ENCODE measurements at regions of chr3 and their contacts with region 1.

Region 1: DNA sequence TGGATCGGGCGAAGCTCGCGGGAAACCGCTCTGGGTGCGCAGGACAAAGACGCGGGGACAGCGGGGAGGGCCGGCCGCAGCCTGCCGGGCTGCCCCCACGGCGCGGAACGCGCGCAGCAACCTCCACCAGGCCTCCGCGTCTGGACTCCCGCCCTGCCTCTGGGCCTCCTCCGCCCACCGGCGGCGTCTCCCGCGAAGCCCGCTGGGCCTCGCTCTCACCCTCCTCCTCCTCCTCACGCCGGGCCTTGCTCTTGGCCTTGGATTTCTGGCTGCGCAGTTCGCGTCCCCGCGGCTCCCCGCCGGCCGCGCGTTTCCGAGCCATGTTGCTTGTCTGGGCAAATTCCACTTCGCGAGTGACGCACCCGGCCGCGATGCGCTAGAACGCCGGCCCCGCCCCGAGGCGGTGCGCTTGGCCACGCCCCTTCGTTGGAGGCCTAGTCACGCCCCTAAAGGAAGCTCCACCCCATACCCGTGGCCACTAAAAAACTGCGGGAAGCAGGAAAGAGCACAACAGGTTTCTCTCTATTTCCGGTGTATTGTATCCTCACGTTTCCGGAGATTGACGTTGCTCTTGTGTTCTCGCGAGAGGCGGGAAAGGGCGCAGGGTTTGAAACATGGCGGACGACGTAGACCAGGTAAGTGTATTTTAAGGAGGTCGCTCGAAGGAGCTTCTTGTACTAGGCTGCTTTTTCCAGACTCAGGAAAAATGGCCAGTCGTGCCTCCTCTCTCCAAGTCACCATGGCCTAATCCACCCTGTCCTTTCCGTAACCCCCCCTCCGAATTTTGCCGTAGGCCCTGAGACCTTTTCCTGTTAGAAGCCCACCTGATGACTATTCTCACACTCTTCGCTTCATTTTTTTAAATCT is at the starts of genes LSM3 and XPC:
- DNase-seq: peak; percentile 96 to 99 (median 97)
- ATAC-seq: peak; percentile 99 to 100 (median 100)
- H3K4me3 ChIP-seq: peak within 1 kb of the TSS; percentile 51 to 92 (median 76)
- H3K27ac ChIP-seq: peak within 1 kb of the TSS; percentile 56 to 98 (median 94)
- H3K4me1 ChIP-seq: peaks cover 0 to 47% (median 32%) of the 10 kb centered on the region in 12 donors
- H3K27me3 ChIP-seq: no peaks in the 10 kb centered on the region
- CTCF ChIP-seq: peak in 1 of 12 donors; percentile 8
- POLR2A ChIP-seq: peak; percentile 68 to 97
- total RNA-seq, gene LSM3: 11.6 to 15.9 (median 13.7) TPM
- total RNA-seq, gene XPC: 7.0 to 20.0 (median 11.1) TPM

Region 2: DNA sequence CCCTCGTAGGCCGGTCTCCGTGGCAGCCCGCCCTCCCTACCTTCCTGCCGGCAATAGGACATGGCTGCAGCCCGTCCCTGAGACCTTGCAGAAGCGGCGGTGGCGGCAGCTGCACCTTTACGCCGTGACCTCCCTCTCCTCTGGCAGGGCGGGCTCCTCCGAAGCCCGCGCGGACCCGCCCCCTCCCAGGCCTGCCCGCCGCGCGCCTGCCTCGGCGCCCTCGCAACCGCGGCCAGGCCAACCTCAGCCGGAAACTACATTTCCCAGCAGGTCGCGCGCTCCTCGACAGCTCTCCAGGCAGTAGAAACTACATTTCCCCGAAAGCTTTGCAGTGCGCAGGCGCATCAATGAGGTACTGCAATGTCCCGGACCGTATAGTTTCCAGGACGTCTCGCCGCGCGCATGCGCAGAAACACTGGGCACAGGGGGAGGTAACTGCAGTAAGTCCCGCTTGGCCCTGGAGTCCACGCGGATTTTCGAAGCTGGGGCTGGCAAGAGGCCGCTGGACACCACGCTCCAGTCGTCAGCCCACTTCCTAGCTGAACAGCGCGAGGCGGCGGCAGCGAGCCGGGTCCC is 53.8 kb before region 1 on chr3 and contains the starts of genes CHCHD4 and TMEM43:
- intact Hi-C with region 1: loop called in 7 of 10 experiments (anchors 1 to 5 kb)
- DNase-seq: peak; percentile 99 to 100 (median 100)
- ATAC-seq: peak; percentile 89 to 95 (median 92)
- H3K4me3 ChIP-seq: peak within 1 kb of the TSS; percentile 68 to 91 (median 85)
- H3K27ac ChIP-seq: peak within 1 kb of the TSS; percentile 88 to 96 (median 92)
- H3K4me1 ChIP-seq: peaks cover 9 to 48% (median 32%) of the 10 kb centered on the region in 12 donors
- H3K27me3 ChIP-seq: no peaks in the 10 kb centered on the region
- CTCF ChIP-seq: peak in 1 of 12 donors; percentile 21
- POLR2A ChIP-seq: peak in 1 of 2 donors; percentile 79
- total RNA-seq, gene CHCHD4: 14.8 to 31.1 (median 25.9) TPM
- total RNA-seq, gene TMEM43: 30.5 to 98.6 (median 46.0) TPM

Region 3: DNA sequence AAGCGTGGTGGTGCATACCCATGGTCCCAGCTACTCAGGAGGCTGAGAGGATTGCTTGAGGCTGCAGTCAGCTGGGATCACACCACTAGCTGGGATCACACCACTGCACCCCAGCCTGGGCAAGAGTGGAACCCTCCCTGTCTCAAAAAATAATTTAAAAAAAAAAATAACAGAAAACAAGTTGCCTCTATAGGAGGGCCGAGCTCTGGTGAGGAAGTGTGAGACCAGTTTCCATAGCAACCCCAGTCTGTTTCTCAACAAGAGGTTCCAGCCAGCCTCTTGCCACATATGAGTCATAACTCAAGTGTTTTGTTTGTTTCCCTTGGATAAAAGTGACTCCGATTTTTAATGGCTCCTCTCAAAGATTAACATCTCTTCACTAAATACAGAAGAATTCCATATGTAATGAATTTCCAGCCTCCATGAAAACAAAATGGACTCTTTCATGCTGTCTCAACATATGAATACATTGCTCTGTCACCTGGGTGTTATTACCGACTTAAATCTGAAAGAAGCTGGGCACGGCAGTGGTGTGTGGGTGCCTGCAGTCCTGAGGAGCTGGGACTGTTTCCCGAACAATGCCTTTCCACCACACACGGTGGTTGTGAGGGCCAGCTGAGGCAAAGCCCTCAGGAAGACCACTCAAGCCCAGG is 33.9 kb before region 1 on chr3:
- intact Hi-C with region 1: loop called in 1 of 10 experiments (anchors 2 kb)
- DNase-seq: peak in 4 of 5 donors; percentile 61 to 80 (median 74)
- ATAC-seq: peak; percentile 65 to 89 (median 80)
- H3K4me3 ChIP-seq: peak overlapping the region in 8 of 12 donors; percentile 10 to 40 (median 32)
- H3K27ac ChIP-seq: peak overlapping the region; percentile 34 to 91 (median 81)
- H3K4me1 ChIP-seq: peaks cover 0 to 74% (median 36%) of the 10 kb centered on the region in 12 donors
- H3K27me3 ChIP-seq: no peaks in the 10 kb centered on the region
- CTCF ChIP-seq: no peak
- POLR2A ChIP-seq: no peak

Region 4: DNA sequence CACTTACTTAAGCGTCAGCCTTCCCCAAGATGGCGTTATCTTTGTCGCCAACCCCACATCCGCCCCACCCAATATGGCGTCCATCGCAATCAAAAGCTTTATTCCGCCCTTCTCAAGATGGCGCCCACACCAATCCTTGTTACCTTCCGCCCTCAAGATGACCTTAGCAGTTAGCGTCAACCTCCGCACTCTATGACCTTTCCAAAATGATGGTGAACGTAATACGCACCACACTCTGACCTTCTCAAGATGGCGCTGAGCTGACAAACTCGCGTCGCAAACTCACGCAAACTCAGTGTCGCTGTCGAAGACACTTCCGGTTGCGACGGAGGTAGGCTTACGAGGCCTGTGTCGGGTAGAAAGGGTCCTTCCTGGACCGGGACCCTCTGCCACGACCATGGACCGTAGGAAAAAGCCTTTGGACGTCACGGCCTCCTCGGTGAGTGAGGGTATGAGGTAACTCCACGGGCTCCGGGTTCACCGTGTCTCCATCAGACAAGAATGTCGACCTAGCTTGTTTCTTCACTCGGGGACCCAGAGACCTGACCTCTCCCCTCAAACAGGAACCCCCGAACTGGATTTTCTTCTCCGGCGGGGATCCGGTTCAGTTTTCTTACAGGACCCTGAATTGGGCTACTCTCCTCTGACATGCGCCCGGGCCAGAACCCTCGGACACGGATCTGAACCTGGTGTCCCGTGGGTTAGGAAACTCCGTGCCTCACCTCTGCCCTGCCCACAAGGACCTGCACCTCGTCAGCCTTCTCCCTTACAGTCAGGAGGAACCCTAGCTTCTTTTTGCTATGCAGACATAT is 473.2 kb after region 1 on chr3 and contains the start of gene CCDC174:
- intact Hi-C with region 1: loop called in 3 of 10 experiments (anchors 5 kb)
- DNase-seq: peak; percentile 92 to 97 (median 96)
- ATAC-seq: peak; percentile 98 to 99 (median 98)
- H3K4me3 ChIP-seq: peak within 1 kb of the TSS; percentile 59 to 93 (median 81)
- H3K27ac ChIP-seq: peak within 1 kb of the TSS; percentile 58 to 96 (median 90)
- H3K4me1 ChIP-seq: peaks cover 0 to 43% (median 32%) of the 10 kb centered on the region in 12 donors
- H3K27me3 ChIP-seq: no peaks in the 10 kb centered on the region
- CTCF ChIP-seq: peak in 1 of 12 donors; percentile 15
- POLR2A ChIP-seq: peak in 1 of 2 donors; percentile 74
- total RNA-seq, gene CCDC174: 8.7 to 16.1 (median 11.7) TPM